Dorsolateral prefrontal cortex (tissue), 120 donors: ENCODE measurements at regions of chr9 and their contacts with region 1.

Region 1: GRCh38 chr9:94912700-94913249 is 186.3 kb downstream of the AOPEP start:
- DNase-seq: peak in 1 of 10 donors; percentile 7
- H3K4me3 ChIP-seq: no peak overlapping the region
- H3K27ac ChIP-seq: peak overlapping the region; percentile 78 to 100 (median 94)
- H3K27me3 ChIP-seq: no peaks in the 10 kb centered on the region
- CTCF ChIP-seq: no peak

Region 2: DNA sequence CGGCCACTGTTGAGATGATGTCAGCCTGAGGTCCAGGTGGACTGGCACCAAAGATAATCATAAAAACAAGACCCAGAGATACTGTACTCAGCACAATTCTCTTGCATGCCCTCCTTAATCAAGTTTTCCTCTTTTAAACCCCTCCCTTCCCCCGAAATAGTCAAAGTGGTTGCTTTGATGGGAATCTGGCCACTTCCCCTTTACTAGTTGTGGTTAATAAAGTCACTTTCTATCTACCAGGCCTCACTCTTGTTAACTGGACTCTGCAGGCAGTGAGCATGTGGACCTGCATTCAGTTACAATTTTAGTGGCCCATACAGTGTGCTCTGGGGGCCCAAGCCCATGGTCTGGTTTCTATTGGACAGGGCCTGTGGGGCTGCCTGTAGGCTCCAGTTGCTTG is 336.6 kb before region 1 on chr9:
- intact Hi-C with region 1: no loop called
- DNase-seq: no peak
- H3K4me3 ChIP-seq: no peak overlapping the region
- H3K27ac ChIP-seq: no peak overlapping the region
- H3K27me3 ChIP-seq: peaks cover 0 to 2% (median 0%) of the 10 kb centered on the region in 45 donors
- CTCF ChIP-seq: no peak

Region 3: DNA sequence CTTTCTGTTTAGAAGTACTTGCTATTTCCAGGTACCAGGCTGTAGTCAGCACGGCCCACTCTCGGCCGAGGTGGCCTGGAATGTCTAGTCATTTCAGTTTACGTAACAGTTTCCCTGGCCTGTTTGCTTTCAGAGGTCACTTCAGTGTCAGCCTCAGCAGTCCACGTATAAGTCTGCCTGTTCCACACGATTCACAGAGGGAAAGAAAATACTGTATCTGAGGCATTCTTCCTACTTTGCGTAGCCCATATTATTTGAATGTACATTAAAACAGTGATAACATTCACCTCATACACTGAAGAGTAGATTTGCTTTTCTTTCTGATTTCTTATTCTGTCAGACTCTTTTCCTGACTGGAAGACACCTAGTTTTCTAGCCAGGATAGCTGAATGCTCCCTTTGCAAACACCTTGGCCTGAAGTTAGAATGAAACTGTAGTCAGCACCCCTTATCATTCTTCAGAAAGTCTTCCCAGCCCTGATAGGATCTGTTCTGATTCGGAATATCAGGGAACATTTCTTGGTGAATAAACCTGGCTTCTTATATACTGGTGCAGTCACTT is 45.4 kb before region 1 on chr9:
- intact Hi-C with region 1: loop called in 1 of 2 experiments (anchors 5 kb)
- DNase-seq: peak in 4 of 10 donors; percentile 30 to 64 (median 34)
- H3K4me3 ChIP-seq: peak overlapping the region in 40 of 59 donors; percentile 1 to 53 (median 20)
- H3K27ac ChIP-seq: peak overlapping the region in 57 of 59 donors; percentile 12 to 83 (median 70)
- H3K27me3 ChIP-seq: no peaks in the 10 kb centered on the region
- CTCF ChIP-seq: no peak

Region 4: GRCh38 chr9:94945197-94946144 is 32.7 kb after region 1 on chr9:
- intact Hi-C with region 1: loop called in 1 of 2 experiments (anchors 5 kb)
- DNase-seq: peak; percentile 56 to 94 (median 84)
- H3K4me3 ChIP-seq: peak overlapping the region in 14 of 59 donors; percentile 1 to 43 (median 20)
- H3K27ac ChIP-seq: peak overlapping the region; percentile 57 to 96 (median 85)
- H3K27me3 ChIP-seq: no peaks in the 10 kb centered on the region
- CTCF ChIP-seq: peak in 1 of 56 donors; percentile 10